ENCODE measurements at regions of chr2 and their contacts with region 1.

Region 1: DNA sequence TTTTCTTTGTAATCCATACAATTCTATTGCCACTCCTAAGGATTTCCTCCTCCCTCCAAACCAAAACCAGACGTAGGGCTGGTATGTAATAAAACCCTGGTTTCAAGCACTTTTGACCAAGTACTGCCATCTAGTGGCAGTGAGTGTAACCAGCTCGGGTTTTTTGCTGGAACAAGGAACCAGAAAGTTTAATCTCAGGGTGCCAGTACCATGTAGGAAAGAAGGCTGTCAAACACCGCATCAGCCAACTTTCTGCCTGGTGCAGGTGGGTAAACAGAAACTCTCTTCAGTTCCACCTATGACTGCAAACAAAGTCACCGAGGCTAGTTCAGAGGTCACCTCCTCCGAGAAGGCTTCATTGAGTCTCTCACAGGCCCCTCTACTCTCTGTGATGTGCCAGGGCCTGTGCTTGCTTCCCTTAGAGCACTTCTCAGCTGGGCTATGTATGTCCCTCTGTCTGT is 10.2 kb upstream of the THNSL2 start:
- DNase-seq: peak; percentile 82
- H3K4me3 ChIP-seq: peak overlapping the region; percentile 13; the same call in 1 of the 2 replicates
- H3K27ac ChIP-seq: no peak overlapping the region
- H3K4me1 ChIP-seq: no peaks in the 10 kb centered on the region
- H3K27me3 ChIP-seq: no peaks in the 10 kb centered on the region

Region 2: GRCh38 chr2:88059979-88060906 is 99.7 kb before region 1 on chr2:
- in situ Hi-C with region 1: loop called (anchors 5 kb)
- DNase-seq: peak; percentile 66
- H3K4me3 ChIP-seq: no peak overlapping the region
- H3K27ac ChIP-seq: no peak overlapping the region
- H3K4me1 ChIP-seq: 0 out of 2 replicates have a peak, but pooled peaks cover 4% of the 10 kb centered on the region
- H3K27me3 ChIP-seq: no peaks in the 10 kb centered on the region

Region 3: GRCh38 chr2:88545121-88545520 is 385.1 kb after region 1 on chr2:
- in situ Hi-C with region 1: no loop called
- DNase-seq: peak; percentile 56
- H3K4me3 ChIP-seq: no peak overlapping the region
- H3K27ac ChIP-seq: no peak overlapping the region
- H3K4me1 ChIP-seq: peaks cover 2% of the 10 kb centered on the region; the same call in 1 of the 2 replicates
- H3K27me3 ChIP-seq: peaks cover 8% of the 10 kb centered on the region